AG04450 (cell line): ENCODE measurements at regions of chr1 and their contacts with region 1.

Region 1: GRCh38 chr1:197868751-197869489 is 33.5 kb upstream of the C1orf53 start:
- DNase-seq: peak; percentile 33
- H3K4me3 ChIP-seq: no peak overlapping the region
- H3K27ac ChIP-seq: no peak overlapping the region
- H3K27me3 ChIP-seq: no peaks in the 10 kb centered on the region
- CTCF ChIP-seq: peak; percentile 76

Region 2: DNA sequence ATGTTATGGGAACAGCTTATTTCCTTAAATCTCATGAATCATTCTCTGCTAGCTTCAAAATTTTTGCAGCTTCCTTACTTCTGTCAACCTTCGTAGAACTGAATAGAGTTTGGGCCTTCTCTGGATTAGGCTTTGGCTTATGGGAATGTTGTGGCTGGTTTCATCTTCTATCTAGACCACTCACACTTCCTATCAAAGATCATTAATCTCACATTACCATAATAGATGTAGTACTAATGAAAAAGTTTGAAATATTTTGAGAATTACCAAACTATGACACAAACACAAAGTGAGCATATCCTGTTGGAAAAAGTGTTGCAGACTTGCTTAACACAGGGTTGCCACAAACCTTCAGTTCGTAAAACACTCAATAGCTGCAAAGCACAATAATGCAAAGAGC is 752.8 kb before region 1 on chr1:
- CTCF ChIA-PET with region 1: no interaction called
- POLR2A ChIA-PET with region 1: no interaction called
- DNase-seq: no peak
- H3K4me3 ChIP-seq: no peak overlapping the region
- H3K27ac ChIP-seq: no peak overlapping the region
- H3K27me3 ChIP-seq: no peaks in the 10 kb centered on the region
- CTCF ChIP-seq: no peak

Region 3: DNA sequence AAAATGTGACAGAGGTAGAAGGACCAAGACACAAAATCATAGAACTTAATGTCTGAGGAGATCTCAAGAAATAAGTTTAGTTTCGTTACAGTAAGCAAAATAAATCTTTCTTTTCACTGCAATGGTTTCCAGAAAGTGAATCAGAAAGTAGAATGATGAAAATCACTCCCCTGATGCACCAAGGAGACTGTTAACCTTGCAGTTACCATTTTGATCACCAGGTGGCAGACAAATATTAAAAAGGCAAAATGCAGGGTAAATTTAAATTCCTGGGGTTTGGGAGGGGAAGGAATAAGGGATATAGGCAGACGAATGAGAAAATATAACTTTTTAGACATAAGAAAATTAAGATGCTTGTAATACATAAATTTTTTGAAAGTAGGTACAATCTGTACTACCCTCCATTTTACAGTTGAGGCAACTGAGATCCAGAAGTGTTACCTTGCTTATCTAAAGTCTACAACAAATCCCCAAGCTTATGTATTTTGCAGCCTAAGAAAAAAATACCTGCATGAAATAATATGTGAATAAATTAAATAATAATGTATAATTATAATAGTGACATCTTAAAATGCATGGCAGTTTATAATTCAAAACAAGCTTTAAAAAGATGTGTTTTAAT is 347.7 kb before region 1 on chr1:
- CTCF ChIA-PET with region 1: interaction called, 15 read pairs
- POLR2A ChIA-PET with region 1: no interaction called
- DNase-seq: peak; percentile 8
- H3K4me3 ChIP-seq: no peak overlapping the region
- H3K27ac ChIP-seq: no peak overlapping the region
- H3K27me3 ChIP-seq: no peaks in the 10 kb centered on the region
- CTCF ChIP-seq: peak; percentile 76

Region 4: DNA sequence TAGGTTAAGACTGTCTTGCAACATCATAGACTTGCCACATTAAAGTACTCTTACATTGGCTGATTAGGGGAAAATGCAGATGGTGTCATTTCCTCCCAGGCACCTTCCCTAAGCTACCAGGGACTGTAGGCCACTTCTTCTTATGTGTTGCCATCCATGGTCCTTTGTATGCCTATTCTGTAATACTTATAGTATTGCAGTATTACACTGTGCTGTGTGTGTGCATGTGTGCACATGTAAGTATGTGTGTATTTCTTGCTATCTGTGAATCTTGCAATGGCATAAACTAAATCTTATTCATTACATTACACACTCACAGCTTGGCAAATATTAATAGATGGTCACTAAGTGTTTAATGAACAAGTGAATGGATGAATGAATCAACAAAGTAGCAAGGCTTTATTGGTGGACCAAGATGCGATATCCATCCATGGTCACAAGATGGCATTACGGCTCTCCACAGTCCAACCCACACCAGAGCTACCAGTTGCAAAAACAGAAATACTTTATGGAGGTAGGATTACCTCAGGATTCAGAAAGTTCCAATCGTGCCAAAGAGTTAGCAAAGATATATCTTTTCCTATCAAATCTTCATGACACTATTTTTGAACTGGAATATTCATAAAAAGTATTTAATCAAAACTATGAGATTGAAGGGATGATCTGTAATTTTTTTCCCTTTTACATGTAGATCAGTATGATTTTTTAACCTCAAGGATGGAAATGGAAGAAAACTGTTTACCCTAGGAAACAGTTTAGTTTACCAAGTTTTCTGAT is 253.8 kb before region 1 on chr1:
- CTCF ChIA-PET with region 1: interaction called, 139 read pairs
- POLR2A ChIA-PET with region 1: no interaction called
- DNase-seq: peak; percentile 15
- H3K4me3 ChIP-seq: no peak overlapping the region
- H3K27ac ChIP-seq: no peak overlapping the region
- H3K27me3 ChIP-seq: no peaks in the 10 kb centered on the region
- CTCF ChIP-seq: peak; percentile 71

Region 5: DNA sequence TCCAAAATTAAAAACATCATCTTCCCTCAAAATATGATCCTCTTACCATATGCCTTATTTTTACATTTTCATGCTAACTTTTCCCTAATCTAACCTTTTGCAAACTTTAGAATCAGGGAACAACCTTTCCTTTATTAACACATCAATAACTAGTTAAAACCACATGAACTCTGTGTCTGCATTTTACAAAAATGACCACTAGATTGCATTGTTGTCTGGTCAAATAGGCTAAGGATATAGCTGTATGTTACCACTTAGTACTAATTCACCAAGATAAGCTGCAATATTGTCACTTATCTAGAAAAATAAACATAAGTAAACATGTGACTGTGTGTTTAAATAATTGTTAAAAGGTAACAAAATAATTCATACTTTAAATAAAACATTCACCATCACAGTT is 176.0 kb before region 1 on chr1:
- CTCF ChIA-PET with region 1: interaction called, 18 read pairs
- POLR2A ChIA-PET with region 1: interaction called, 6 read pairs
- DNase-seq: no peak
- H3K4me3 ChIP-seq: no peak overlapping the region
- H3K27ac ChIP-seq: no peak overlapping the region
- H3K27me3 ChIP-seq: no peaks in the 10 kb centered on the region
- CTCF ChIP-seq: peak; percentile 34

Region 6: GRCh38 chr1:197915862-197916499 is 47.1 kb after region 1 on chr1:
- CTCF ChIA-PET with region 1: interaction called, 12 read pairs
- POLR2A ChIA-PET with region 1: no interaction called
- DNase-seq: no peak
- H3K4me3 ChIP-seq: peak overlapping the region; percentile 47
- H3K27ac ChIP-seq: no peak overlapping the region
- H3K27me3 ChIP-seq: peaks cover 98% of the 10 kb centered on the region
- CTCF ChIP-seq: peak; percentile 76